H1 (cell line): ENCODE measurements at regions of chr11 and their contacts with region 1.

Region 1: GRCh38 chr11:67401495-67402191 is at the start of gene PPP1CA:
- DNase-seq: peak; percentile 64 to 93
- H3K4me3 ChIP-seq: peak within 1 kb of the TSS; percentile 44 to 98 (median 73)
- H3K27ac ChIP-seq: peak within 1 kb of the TSS; percentile 79; the same call in 1 of the 2 replicates
- H3K4me1 ChIP-seq: peaks cover 0 to 8% (median 4%) of the 10 kb centered on the region in 4 experiments; a peak in 5 of 7 replicates
- H3K27me3 ChIP-seq: no peaks in the 10 kb centered on the region
- CTCF ChIP-seq: peak in 1 of 3 experiments; percentile 37; a peak in 1 of 4 replicates
- EP300 ChIP-seq: no peak
- POLR2A ChIP-seq: peak in 1 of 2 experiments; percentile 72; a peak in 1 of 3 replicates
- RAD21 ChIP-seq: 0 out of 4 replicates have a peak, but pooled peaks of 1 of the 2 experiments have one; percentile 0
- total RNA-seq, gene PPP1CA: 198 and 210 TPM in 2 replicates

Region 2: DNA sequence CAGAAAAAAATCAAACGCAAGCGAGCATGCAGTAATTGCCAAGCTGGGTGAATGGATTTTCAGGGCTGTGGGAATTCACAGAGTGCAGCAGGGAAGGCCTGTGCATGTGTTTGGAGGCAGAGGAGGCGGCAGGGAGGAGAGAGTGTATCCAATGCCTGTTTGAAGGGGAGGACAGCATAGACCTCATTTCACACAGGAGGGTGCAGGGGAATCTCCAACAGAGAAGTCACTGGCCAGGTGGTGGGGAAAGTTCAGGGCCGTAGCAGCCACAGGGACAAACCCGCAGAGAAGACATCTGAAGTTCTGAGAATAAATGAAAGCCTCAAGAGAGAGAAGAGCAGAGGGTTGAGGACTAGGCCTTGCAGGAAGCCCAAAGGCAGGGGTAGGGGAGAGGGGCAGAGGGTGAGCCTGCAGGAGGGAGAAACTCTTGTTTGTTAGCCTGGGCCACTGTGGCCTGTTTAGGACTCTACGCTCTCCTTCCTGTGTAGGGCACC is 301.8 kb before region 1 on chr11:
- CTCF ChIA-PET with region 1: no interaction called
- POLR2A ChIA-PET with region 1: no interaction called
- DNase-seq: no peak
- H3K4me3 ChIP-seq: no peak overlapping the region
- H3K27ac ChIP-seq: no peak overlapping the region
- H3K4me1 ChIP-seq: peaks cover 0 to 3% (median 1%) of the 10 kb centered on the region in 4 experiments; a peak in 2 of 7 replicates
- H3K27me3 ChIP-seq: no peaks in the 10 kb centered on the region
- CTCF ChIP-seq: no peak
- EP300 ChIP-seq: no peak
- POLR2A ChIP-seq: no peak
- RAD21 ChIP-seq: no peak

Region 3: DNA sequence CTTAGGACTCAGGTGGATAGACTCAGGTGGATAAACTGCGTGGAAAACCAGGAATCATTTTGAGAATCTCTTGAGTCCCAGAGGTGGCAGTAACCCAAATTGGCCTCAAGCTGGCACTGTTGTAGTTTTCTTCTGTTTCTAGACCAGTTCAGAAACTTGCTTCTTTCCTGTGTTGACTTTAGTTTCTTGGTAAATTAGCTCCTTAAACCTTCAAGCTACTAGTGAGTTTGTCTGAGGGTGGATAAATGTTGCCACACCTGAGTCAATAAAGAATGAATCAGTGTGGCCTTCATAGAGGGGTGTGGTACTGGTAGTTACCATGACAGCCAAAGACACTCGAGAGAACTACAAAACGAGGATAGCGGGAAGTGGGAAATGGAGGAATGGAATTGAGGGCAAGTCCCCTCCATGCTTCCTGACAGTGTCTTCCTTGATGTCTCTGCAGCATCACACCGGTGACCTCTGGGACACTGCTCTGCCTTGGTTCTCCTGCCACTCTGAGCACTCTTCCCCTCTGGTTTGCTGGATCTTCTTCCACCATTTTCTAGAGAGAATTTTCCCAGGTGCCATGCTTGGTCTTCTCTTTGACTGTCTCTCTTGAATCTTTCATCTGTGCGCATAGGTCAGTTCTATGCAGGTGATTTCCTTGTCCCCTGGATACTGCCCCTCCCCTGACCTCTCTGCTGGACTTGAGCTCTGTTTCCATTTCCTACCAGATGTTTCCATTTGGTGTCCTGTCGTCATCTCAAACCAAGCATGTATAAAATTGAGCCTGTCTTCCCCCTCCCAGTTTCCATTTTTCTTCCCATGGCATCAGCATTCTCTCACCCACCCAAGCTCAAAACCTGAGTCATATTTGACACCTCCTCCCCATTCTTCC is 55.5 kb before region 1 on chr11:
- CTCF ChIA-PET with region 1: interaction called, 1,305 read pairs
- POLR2A ChIA-PET with region 1: no interaction called
- DNase-seq: no peak
- H3K4me3 ChIP-seq: no peak overlapping the region
- H3K27ac ChIP-seq: no peak overlapping the region
- H3K4me1 ChIP-seq: no peaks in the 10 kb centered on the region
- H3K27me3 ChIP-seq: no peaks in the 10 kb centered on the region
- CTCF ChIP-seq: peak in 2 of 3 experiments; percentile 68 to 86; a peak in 3 of 4 replicates
- EP300 ChIP-seq: no peak
- POLR2A ChIP-seq: no peak
- RAD21 ChIP-seq: peak; percentile 55 to 63

Region 4: DNA sequence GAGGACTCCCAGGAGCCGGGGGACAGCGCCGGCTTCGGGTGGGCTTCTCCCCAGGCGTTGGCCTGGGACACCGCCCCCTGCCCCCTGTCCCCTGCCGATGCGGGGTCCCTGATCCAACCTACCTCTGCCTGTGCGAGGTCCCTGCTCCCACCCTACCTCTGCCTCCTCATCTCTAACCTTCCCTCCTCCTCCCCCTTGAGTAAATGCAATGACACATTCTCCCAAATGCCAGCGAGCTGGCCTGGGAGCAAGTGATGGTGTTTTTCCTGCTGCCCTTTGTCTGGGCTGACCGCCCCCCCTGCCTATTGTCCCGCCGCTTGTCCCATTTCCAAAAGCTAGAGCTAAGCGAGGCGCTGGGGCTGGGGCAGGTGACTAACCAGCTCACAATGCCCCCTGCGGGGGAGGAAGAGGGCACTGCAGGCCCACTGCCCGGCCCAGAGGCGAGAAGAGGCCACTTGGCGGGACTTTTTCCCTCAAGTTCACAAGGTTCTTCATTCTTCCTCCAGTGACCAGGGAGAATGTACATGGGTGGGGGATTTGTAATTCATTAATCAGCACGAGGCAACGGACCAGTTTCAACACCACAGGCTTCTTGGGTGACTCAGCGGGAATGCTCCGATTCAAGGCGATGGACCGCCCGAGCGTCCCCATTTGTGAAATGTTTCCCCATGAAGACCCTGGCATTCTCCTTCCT is 27.6 kb before region 1 on chr11:
- CTCF ChIA-PET with region 1: interaction called, 11 read pairs
- POLR2A ChIA-PET with region 1: interaction called, 4 read pairs
- DNase-seq: peak; percentile 78 to 79
- H3K4me3 ChIP-seq: peak overlapping the region; percentile 41 to 77 (median 51)
- H3K27ac ChIP-seq: no peak overlapping the region
- H3K4me1 ChIP-seq: peaks cover 0 to 45% (median 38%) of the 10 kb centered on the region in 4 experiments; a peak in 6 of 7 replicates
- H3K27me3 ChIP-seq: peaks cover 7 to 68% (median 57%) of the 10 kb centered on the region in 4 experiments
- CTCF ChIP-seq: peak in 2 of 3 experiments; percentile 29 to 34; a peak in 3 of 4 replicates
- EP300 ChIP-seq: no peak
- POLR2A ChIP-seq: no peak
- RAD21 ChIP-seq: peak in 1 of 2 experiments; percentile 3; a peak in 1 of 4 replicates

Region 5: GRCh38 chr11:67391304-67392132 is 10.1 kb before region 1 on chr11 and contains the start of gene RAD9A:
- CTCF ChIA-PET with region 1: interaction called, 16 read pairs
- POLR2A ChIA-PET with region 1: interaction called, 31 read pairs
- DNase-seq: peak; percentile 67 to 91
- H3K4me3 ChIP-seq: peak within 1 kb of the TSS; percentile 63 to 88 (median 69)
- H3K27ac ChIP-seq: peak within 1 kb of the TSS; percentile 35; the same call in 1 of the 2 replicates
- H3K4me1 ChIP-seq: peaks cover 0 to 12% (median 7%) of the 10 kb centered on the region in 4 experiments; a peak in 4 of 7 replicates
- H3K27me3 ChIP-seq: no peaks in the 10 kb centered on the region; a peak in 2 of 7 replicates
- CTCF ChIP-seq: no peak
- EP300 ChIP-seq: peak in 1 of 2 experiments; percentile 78; a peak in 2 of 3 replicates
- POLR2A ChIP-seq: peak in 1 of 2 experiments; percentile 56; a peak in 2 of 3 replicates
- RAD21 ChIP-seq: peak in 1 of 2 experiments; percentile 1; a peak in 1 of 4 replicates
- total RNA-seq, gene RAD9A: 20.8 and 22.2 TPM in 2 replicates

Region 6: DNA sequence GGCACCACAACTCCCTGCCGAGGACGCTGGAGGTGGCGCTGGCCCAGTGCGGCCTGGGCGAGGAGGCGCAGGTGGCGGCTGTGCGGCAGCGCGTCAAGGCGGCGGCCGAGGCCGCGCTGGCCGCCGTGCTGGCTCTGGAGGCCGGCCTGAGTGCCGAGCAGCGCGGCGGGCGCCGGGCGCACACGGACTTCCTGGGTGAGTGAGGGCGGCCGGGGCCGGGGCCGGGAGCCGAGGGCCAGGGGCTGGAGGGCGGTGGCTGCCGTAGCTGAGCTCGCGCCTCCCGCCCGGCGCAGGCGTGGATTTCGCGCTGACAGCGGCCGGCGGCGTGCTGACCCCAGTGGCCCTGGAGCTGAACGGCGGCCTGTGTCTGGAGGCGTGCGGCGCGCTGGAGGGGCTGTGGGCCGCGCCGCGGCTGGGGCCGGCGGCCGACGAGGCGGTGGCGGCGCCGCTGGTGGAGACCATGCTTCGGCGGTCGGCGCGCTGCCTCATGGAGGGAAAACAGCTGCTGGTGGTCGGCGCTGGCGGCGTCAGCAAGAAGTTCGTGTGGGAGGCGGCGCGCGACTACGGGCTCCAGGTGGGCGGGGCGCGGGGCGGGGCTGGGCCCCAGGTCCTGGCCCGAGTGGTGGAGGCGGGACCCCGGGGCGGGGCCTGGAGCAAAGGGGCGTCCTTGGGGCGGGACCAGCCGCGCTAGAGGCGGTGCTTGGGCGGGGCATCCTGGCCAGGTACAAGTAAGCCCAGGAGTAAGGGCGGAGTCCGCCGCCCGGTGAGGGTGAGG is 19.2 kb after region 1 on chr11:
- CTCF ChIA-PET with region 1: interaction called, 13 read pairs
- POLR2A ChIA-PET with region 1: interaction called, 6 read pairs
- DNase-seq: peak; percentile 84 to 100
- H3K4me3 ChIP-seq: peak overlapping the region; percentile 32 to 64 (median 36); a peak in 7 of 8 replicates
- H3K27ac ChIP-seq: no peak overlapping the region
- H3K4me1 ChIP-seq: peaks cover 4 to 15% (median 10%) of the 10 kb centered on the region in 4 experiments
- H3K27me3 ChIP-seq: peaks cover 0 to 8% (median 5%) of the 10 kb centered on the region in 4 experiments; a peak in 4 of 7 replicates
- CTCF ChIP-seq: no peak
- EP300 ChIP-seq: no peak
- POLR2A ChIP-seq: peak in 1 of 2 experiments; percentile 42; a peak in 1 of 3 replicates
- RAD21 ChIP-seq: no peak

Region 7: DNA sequence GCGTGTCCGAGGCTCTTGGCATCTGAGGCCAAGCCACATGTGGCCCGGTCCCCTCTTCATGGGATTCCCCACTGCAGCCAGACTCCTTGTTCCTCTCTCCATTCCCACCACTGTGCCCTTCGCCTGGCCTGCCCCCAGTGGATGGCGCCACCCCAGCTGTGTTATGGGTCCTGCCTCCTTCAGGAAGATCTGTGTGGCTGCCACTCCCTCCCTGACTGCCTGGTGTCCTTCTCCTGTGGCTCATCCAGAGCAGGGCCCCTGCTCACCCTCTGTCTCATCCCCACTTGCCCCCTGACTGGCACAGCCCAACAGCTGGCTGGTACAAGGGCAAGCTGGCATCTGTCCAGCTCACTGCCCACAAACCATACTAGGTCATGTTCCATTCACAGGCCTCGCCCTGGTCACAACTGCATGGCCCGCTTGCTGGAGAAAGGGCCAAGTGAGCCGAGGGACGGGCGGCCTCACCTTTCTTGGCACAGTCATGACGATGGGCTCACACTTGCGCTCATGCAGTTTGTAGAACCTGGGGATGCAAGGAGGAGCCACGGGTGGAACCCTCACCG is 37.8 kb after region 1 on chr11:
- CTCF ChIA-PET with region 1: no interaction called
- POLR2A ChIA-PET with region 1: interaction called, 25 read pairs
- DNase-seq: no peak
- H3K4me3 ChIP-seq: no peak overlapping the region
- H3K27ac ChIP-seq: no peak overlapping the region
- H3K4me1 ChIP-seq: peaks cover 0 to 24% (median 16%) of the 10 kb centered on the region in 4 experiments; a peak in 6 of 7 replicates
- H3K27me3 ChIP-seq: no peaks in the 10 kb centered on the region
- CTCF ChIP-seq: peak in 2 of 3 experiments; percentile 53 to 60; a peak in 3 of 4 replicates
- EP300 ChIP-seq: no peak
- POLR2A ChIP-seq: no peak
- RAD21 ChIP-seq: peak; percentile 31 to 46; a peak in 3 of 4 replicates